ENCODE measurements at regions of chr2 and their contacts with region 1.

Region 1: GRCh38 chr2:234373060-234373459 is 123.8 kb downstream of the ARL4C start:
- DNase-seq: peak in 13 of 35 experiments; percentile 8 to 56 (median 24)
- ATAC-seq: peak; percentile 24 to 69 (median 52)
- H3K4me3 ChIP-seq: no peak overlapping the region
- H3K4me3 Mint-ChIP-seq: peak overlapping the region; percentile 14 to 86 (median 35)
- H3K27ac ChIP-seq: peak overlapping the region; percentile 45
- H3K27ac Mint-ChIP-seq: peak overlapping the region; percentile 87 to 91
- H3K4me1 ChIP-seq: peaks cover 37 to 56% of the 10 kb centered on the region in 2 experiments
- H3K4me1 Mint-ChIP-seq: peaks cover 60 to 75% (median 74%) of the 10 kb centered on the region in 3 donors
- H3K27me3 ChIP-seq: no peaks in the 10 kb centered on the region
- H3K27me3 Mint-ChIP-seq: no peaks in the 10 kb centered on the region

Region 2: DNA sequence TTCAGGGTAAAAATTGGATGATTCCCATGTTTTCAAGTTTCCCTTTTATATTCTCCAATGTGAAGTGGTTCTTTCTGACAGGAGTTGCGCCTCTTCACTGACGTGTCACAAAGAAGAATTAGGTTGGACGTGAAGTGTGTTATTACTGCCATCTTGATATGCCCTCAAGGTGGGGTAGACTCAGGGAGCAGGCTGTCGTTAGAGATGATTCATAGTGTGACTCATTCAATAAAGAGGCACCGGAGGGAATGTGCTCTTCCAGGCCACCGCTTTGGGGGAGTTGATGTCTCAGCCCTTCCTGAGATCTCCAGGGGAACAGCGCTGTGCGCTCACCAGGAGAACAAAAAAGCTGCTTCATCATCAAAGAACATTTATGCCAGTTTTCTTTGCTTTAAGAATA is 1022.4 kb before region 1 on chr2:
- CTCF ChIA-PET with region 1: no interaction called
- POLR2A ChIA-PET with region 1: interaction called in 1 of 2 experiments, 15 read pairs
- DNase-seq: peak in 4 of 35 experiments; percentile 1 to 36 (median 26)
- ATAC-seq: peak in 2 of 4 experiments; percentile 38 to 42
- H3K4me3 ChIP-seq: no peak overlapping the region
- H3K4me3 Mint-ChIP-seq: no peak overlapping the region
- H3K27ac ChIP-seq: no peak overlapping the region
- H3K27ac Mint-ChIP-seq: peak overlapping the region in 1 of 2 donors; percentile 44
- H3K4me1 ChIP-seq: peaks cover 8 to 31% of the 10 kb centered on the region in 2 experiments
- H3K4me1 Mint-ChIP-seq: peaks cover 43 to 56% (median 48%) of the 10 kb centered on the region in 3 donors
- H3K27me3 ChIP-seq: peaks cover 0 to 5% of the 10 kb centered on the region in 2 experiments
- H3K27me3 Mint-ChIP-seq: no peaks in the 10 kb centered on the region

Region 3: DNA sequence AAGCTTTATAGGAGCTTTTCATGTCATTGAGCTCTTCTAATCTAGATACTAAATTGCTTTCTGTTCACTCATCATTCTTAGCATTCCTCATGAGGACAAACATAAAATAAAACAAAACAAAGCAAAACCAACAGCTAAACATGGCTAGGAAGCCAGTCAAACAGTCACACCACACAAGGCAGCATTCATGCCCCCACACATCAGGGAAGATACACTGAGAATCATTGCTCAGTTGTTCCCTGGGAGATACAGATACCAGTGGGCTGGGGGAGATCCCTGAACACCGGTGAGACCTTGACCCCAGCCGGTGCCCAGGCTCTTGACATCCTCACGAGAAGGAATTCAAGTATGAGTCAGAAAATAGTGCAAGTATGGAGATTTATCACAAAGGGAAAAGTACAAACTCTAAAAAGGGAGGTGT is 301.7 kb after region 1 on chr2:
- CTCF ChIA-PET with region 1: no interaction called
- POLR2A ChIA-PET with region 1: no interaction called
- DNase-seq: no peak
- ATAC-seq: no peak
- H3K4me3 ChIP-seq: no peak overlapping the region
- H3K4me3 Mint-ChIP-seq: no peak overlapping the region
- H3K27ac ChIP-seq: no peak overlapping the region
- H3K27ac Mint-ChIP-seq: no peak overlapping the region
- H3K4me1 ChIP-seq: no peaks in the 10 kb centered on the region
- H3K4me1 Mint-ChIP-seq: no peaks in the 10 kb centered on the region
- H3K27me3 ChIP-seq: peaks cover 0 to 16% of the 10 kb centered on the region in 2 experiments
- H3K27me3 Mint-ChIP-seq: peaks cover 15 to 18% of the 10 kb centered on the region in 2 donors